ENCODE measurements at regions of chr12 and their contacts with region 1.

Region 1: DNA sequence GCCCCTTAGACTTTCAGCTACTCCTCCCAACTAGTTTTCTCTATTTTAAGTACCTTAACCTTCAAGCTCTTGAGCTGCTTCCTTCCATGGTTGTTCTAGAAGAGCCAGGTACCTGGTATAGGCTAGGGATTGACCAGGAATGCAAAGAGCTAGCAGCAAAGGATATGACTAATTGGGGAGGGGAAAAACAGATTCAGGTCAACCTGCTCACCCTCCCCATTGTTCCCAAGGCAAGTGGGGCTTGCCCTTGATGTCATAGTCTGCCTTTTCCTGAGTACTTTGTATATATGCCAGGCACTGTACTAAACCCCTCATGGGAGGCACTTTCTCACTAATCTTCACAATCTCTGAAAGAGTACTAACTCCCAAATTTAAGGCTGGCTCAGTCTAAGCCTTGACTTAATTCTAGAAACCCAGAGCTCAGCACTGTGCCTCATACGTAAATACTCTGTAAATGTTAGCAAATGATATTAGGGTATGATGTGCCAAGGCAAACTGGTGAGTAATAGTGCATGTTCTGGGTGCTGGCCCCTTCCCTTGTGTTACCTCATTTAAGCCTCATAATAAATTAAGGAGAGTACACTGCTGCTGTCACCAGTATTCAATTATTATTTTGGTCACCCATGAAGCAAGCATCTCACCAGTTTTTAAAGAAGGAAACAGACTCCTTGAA is 42.2 kb downstream of the SUDS3 start:
- DNase-seq: no peak
- ATAC-seq: peak; percentile 14 to 75
- H3K4me3 ChIP-seq: no peak overlapping the region
- H3K27ac ChIP-seq: no peak overlapping the region
- H3K4me1 ChIP-seq: no peaks in the 10 kb centered on the region
- H3K27me3 ChIP-seq: no peaks in the 10 kb centered on the region

Region 2: GRCh38 chr12:118611295-118611694 is 192.8 kb after region 1 on chr12:
- intact Hi-C with region 1: loop called in 1 of 4 experiments (anchors 10 kb)
- DNase-seq: peak; percentile 15 to 41 (median 35)
- ATAC-seq: peak; percentile 54 to 73
- H3K4me3 ChIP-seq: no peak overlapping the region
- H3K27ac ChIP-seq: no peak overlapping the region
- H3K4me1 ChIP-seq: no peaks in the 10 kb centered on the region
- H3K27me3 ChIP-seq: no peaks in the 10 kb centered on the region